ENCODE measurements at regions of chr22 and their contacts with region 1.

Region 1: DNA sequence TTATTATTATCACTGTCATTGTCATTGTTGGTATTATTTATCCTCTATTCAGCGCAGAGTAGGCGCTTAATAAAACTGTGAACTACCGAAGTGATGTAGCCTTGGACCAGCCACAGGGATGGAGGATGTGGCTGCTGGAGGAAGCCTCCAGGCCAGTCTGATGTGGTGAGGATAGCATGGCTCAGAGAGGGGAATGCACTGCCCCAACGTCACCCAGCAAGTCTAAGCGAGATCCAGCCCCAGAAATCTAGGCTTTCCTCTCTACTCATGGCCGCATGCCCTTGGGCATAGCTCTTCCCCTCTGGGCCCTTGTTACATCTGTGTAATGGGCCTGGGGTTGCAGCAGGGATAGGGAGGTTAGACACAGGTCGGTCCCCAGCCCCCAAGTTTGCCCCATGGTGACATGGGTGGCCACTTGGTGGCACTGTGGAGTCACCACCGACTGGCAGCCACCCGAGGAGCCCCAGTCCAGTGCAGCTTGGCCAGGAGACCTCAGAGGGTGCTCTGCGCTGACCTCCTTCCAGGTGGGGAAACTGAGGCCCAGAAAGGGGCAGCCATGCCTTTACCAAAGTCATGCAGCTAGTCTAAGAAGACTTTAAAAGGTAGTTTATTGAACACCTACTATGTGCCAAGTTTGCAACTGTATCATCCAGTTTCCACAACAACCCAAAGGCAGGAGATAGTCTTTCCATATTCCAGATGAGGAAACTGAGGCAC is 395.7 kb downstream of the MN1 start:
- DNase-seq: peak; percentile 34
- H3K4me3 ChIP-seq: no peak overlapping the region
- H3K27ac ChIP-seq: no peak overlapping the region
- H3K4me1 ChIP-seq: no peaks in the 10 kb centered on the region
- H3K27me3 ChIP-seq: no peaks in the 10 kb centered on the region
- CTCF ChIP-seq: peak; percentile 44 to 82 (median 77)
- POLR2A ChIP-seq: no peak

Region 2: GRCh38 chr22:26763633-26764361 is 642.0 kb before region 1 on chr22:
- intact Hi-C with region 1: loop called (anchors 10 kb)
- DNase-seq: no peak
- H3K4me3 ChIP-seq: no peak overlapping the region
- H3K27ac ChIP-seq: no peak overlapping the region
- H3K4me1 ChIP-seq: no peaks in the 10 kb centered on the region
- H3K27me3 ChIP-seq: no peaks in the 10 kb centered on the region
- CTCF ChIP-seq: no peak
- POLR2A ChIP-seq: no peak

Region 3: DNA sequence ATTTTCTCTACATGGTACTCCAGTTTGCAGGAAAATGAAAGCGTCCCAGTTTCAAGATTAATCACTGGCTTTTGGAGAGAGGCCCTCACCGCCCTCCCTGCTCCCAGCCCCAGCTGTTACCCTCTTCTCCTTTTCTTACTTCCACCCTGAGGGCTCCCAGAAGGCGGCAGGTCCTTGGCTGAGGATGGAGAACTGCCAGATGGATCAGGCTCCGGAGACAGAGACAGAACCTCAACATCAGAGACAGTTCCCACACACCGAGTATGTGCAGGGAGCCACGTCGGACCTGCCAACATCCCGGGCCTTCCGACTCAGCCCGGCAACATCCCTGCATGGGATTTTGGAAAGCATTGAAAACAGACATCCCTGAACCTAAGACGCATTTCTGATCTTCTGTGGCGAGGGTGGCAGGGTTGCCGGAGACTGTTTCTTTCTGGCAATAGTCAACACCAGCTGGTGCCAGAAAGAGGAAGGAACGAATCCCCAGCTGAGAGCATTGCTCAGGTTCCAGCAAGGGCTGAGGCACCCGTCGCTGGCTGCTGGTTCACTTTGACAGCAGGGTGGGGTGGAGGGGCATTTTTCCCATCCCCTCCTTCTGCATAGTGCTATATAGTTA is 281.4 kb before region 1 on chr22:
- intact Hi-C with region 1: no loop called
- DNase-seq: no peak
- H3K4me3 ChIP-seq: no peak overlapping the region
- H3K27ac ChIP-seq: no peak overlapping the region
- H3K4me1 ChIP-seq: no peaks in the 10 kb centered on the region
- H3K27me3 ChIP-seq: no peaks in the 10 kb centered on the region
- CTCF ChIP-seq: no peak
- POLR2A ChIP-seq: no peak

Region 4: GRCh38 chr22:27461470-27461869 is 55.6 kb after region 1 on chr22:
- intact Hi-C with region 1: no loop called
- DNase-seq: no peak
- H3K4me3 ChIP-seq: no peak overlapping the region
- H3K27ac ChIP-seq: no peak overlapping the region
- H3K4me1 ChIP-seq: no peaks in the 10 kb centered on the region
- H3K27me3 ChIP-seq: no peaks in the 10 kb centered on the region
- CTCF ChIP-seq: no peak
- POLR2A ChIP-seq: no peak

Region 5: DNA sequence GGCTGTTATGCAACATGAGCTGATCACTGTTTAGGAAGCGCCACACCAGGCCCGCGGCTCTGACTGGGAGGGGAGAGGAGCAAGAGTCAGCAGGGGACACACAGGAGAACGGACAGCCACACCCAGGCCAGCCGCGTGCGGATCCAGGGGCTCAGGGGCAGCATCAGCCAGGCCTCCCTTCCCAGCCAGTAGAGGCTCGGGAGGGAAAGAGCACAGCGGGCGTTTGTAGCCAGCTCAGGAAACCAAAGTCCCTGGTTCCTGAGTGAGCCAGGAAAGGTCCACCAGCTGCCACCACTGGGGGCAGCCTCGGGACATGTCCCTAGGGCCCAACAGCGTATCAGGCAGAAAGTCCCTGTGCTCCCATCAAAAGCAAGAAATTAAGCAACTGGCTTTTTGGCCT is 585.0 kb after region 1 on chr22:
- intact Hi-C with region 1: loop called (anchors 5 kb)
- DNase-seq: no peak
- H3K4me3 ChIP-seq: no peak overlapping the region
- H3K27ac ChIP-seq: peak overlapping the region in 1 of 2 donors; percentile 32
- H3K4me1 ChIP-seq: no peaks in the 10 kb centered on the region
- H3K27me3 ChIP-seq: no peaks in the 10 kb centered on the region
- CTCF ChIP-seq: peak in 2 of 4 experiments; percentile 24
- POLR2A ChIP-seq: no peak